PC-9 (cell line): ENCODE measurements at regions of chr22 and their contacts with region 1.

Region 1: DNA sequence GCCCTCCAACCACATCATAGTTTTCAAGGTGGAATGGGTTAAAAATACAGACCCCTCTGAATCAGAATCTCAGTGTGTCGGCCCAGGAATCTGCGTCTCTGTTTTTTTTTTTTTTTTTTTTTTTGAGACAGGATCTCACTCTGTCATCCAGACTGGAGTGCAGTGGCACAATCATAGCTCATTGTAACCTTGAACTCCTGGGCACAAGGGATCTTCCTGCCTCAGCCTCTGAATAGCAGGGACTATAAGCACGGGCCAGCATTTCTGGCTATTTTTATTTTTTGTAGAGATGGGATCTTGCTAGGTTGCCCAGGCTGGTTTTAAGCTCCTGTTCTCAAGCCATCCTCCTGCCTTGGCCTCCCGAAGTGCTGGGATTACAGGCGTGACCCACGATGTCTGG is 28.2 kb downstream of the MIAT start:
- DNase-seq: no peak
- H3K4me3 ChIP-seq: no peak overlapping the region
- H3K27ac ChIP-seq: no peak overlapping the region
- H3K4me1 ChIP-seq: no peaks in the 10 kb centered on the region
- H3K27me3 ChIP-seq: no peaks in the 10 kb centered on the region
- CTCF ChIP-seq: no peak

Region 2: GRCh38 chr22:26579331-26579886 is 106.2 kb before region 1 on chr22:
- CTCF ChIA-PET with region 1: no interaction called
- POLR2A ChIA-PET with region 1: no interaction called
- intact Hi-C with region 1: no loop called
- DNase-seq: no peak
- H3K4me3 ChIP-seq: no peak overlapping the region
- H3K27ac ChIP-seq: no peak overlapping the region
- H3K4me1 ChIP-seq: no peaks in the 10 kb centered on the region
- H3K27me3 ChIP-seq: no peaks in the 10 kb centered on the region
- CTCF ChIP-seq: no peak

Region 3: GRCh38 chr22:27885977-27886842 is 1200.6 kb after region 1 on chr22:
- CTCF ChIA-PET with region 1: interaction called, 12 read pairs
- POLR2A ChIA-PET with region 1: no interaction called
- intact Hi-C with region 1: no loop called
- DNase-seq: peak; percentile 9 to 70
- H3K4me3 ChIP-seq: no peak overlapping the region
- H3K27ac ChIP-seq: no peak overlapping the region
- H3K4me1 ChIP-seq: peaks cover 7% of the 10 kb centered on the region
- H3K27me3 ChIP-seq: no peaks in the 10 kb centered on the region
- CTCF ChIP-seq: peak; percentile 96